CD8-positive, alpha-beta T cell (primary cell): ENCODE measurements at regions of chr5 and their contacts with region 1.

Region 1: DNA sequence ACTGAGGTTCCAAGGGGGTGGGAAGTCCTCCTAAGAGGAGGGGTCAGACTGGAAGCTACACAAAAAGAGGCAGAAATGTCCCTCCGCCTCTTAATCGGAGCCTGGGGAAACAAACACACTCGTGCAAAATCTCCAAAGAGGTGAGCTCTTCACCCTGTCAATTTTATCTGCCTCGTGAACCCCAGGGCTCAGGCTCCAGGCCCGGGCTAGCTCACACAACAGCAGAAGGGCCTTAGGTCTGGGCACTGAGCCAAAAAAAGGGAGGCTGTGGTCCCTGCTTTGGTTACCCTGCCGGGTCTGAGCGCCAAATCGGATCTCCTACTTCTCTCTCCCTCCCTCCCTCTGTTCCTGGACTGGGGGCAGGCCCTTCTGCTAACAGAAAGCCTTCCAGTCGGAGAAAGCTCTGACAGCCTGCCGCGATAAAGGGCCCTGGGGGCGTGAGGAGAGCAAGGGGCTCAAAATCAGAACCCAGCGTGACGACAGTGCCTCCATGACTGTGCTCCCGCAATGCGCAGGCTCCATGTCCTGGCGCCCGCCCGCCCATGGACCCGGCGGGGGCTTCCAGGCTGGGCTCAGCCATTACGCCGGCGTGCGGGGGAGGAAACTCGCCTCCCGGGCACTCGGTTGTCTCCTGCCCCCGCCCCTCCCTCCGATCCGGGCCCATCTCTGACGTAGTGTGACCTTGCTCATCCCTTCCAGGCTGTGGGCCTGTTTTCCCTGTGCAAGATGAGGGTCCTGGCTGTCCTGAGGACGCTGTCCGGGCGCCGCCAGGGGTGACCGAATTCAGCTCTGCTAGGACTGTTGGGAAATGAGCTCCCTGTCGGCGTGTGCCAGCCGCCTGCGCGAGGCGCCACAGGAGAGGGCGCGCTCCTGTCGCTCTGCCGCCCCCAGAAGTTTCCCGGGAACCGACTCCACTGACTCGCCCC is 865 bp upstream of the SLC22A4 start:
- DNase-seq: peak; percentile 24 to 82 (median 63)
- ATAC-seq: peak; percentile 53
- H3K4me3 ChIP-seq: peak overlapping the region; percentile 76 to 87
- H3K4me3 Mint-ChIP-seq: peak overlapping the region; percentile 90
- H3K27ac ChIP-seq: peak overlapping the region; percentile 42 to 50
- H3K27ac Mint-ChIP-seq: peak overlapping the region; percentile 77
- H3K4me1 ChIP-seq: peaks cover 14% of the 10 kb centered on the region
- H3K4me1 Mint-ChIP-seq: peaks cover 16% of the 10 kb centered on the region
- H3K27me3 ChIP-seq: peaks cover 0 to 2% of the 10 kb centered on the region in 2 experiments
- H3K27me3 Mint-ChIP-seq: peaks cover 15% of the 10 kb centered on the region
- CTCF ChIP-seq: no peak

Region 2: DNA sequence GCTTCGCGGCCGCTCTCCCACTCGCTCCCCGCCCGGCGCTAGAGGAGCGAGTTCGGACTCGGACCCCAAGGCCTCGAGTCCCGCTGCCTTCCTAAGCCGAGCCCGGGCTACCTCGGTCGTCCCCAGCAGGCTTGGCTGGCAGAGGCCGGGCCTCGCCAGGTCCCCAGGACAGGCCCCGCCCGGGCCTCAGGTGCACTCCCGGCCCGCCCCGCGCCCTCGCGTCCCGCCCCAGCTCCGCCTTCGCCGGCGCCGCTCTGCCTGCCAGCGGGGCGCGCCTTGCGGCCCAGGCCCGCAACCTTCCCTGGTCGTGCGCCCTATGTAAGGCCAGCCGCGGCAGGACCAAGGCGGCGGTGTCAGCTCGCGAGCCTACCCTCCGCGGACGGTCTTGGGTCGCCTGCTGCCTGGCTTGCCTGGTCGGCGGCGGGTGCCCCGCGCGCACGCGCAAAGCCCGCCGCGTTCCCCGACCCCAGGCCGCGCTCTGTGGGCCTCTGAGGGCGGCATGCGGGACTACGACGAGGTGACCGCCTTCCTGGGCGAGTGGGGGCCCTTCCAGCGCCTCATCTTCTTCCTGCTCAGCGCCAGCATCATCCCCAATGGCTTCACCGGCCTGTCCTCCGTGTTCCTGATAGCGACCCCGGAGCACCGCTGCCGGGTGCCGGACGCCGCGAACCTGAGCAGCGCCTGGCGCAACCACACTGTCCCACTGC is 76.3 kb after region 1 on chr5 and contains the start of gene SLC22A5:
- CTCF ChIA-PET with region 1: interaction called, 3 read pairs
- POLR2A ChIA-PET with region 1: interaction called, 3 read pairs
- intact Hi-C with region 1: loop called in 1 of 2 experiments (anchors 5 kb)
- DNase-seq: peak; percentile 44 to 84 (median 68)
- ATAC-seq: peak; percentile 94
- H3K4me3 ChIP-seq: peak within 1 kb of the TSS; percentile 68 to 78
- H3K4me3 Mint-ChIP-seq: peak within 1 kb of the TSS; percentile 81
- H3K27ac ChIP-seq: peak within 1 kb of the TSS; percentile 68 to 77
- H3K27ac Mint-ChIP-seq: peak within 1 kb of the TSS; percentile 84
- H3K4me1 ChIP-seq: peaks cover 15% of the 10 kb centered on the region
- H3K4me1 Mint-ChIP-seq: peaks cover 31% of the 10 kb centered on the region
- H3K27me3 ChIP-seq: no peaks in the 10 kb centered on the region
- H3K27me3 Mint-ChIP-seq: no peaks in the 10 kb centered on the region
- CTCF ChIP-seq: no peak
- total RNA-seq, gene SLC22A5: 4.5 to 5.3 TPM

Region 3: DNA sequence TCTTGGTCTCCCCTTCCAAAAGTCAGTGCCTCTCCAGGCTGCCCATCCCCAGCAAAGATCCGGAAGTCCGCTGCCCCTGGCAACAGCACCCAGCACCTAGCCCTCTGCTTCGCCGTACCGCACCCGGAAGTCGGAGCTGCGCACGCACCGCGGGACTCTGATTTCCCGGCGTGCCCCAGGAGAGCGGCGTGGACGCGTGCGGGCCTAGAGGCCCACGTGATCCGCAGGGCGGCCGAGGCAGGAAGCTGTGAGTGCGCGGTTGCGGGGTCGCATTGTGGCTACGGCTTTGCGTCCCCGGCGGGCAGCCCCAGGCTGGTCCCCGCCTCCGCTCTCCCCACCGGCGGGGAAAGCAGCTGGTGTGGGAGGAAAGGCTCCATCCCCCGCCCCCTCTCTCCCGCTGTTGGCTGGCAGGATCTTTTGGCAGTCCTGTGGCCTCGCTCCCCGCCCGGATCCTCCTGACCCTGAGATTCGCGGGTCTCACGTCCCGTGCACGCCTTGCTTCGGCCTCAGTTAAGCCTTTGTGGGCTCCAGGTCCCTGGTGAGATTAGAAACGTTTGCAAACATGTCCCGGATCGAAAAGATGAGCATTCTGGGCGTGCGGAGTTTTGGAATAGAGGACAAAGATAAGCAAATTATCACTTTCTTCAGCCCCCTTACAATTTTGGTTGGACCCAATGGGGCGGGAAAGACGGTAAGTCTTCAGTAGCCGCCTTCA is 263.6 kb after region 1 on chr5 and contains the start of gene RAD50:
- CTCF ChIA-PET with region 1: no interaction called
- POLR2A ChIA-PET with region 1: no interaction called
- intact Hi-C with region 1: loop called in 1 of 2 experiments (anchors 5 kb)
- DNase-seq: peak; percentile 83 to 96 (median 91)
- ATAC-seq: peak; percentile 95
- H3K4me3 ChIP-seq: peak within 1 kb of the TSS; percentile 62 to 97
- H3K4me3 Mint-ChIP-seq: peak within 1 kb of the TSS; percentile 98
- H3K27ac ChIP-seq: peak within 1 kb of the TSS; percentile 68 to 91
- H3K27ac Mint-ChIP-seq: peak within 1 kb of the TSS; percentile 98
- H3K4me1 ChIP-seq: peaks cover 21% of the 10 kb centered on the region
- H3K4me1 Mint-ChIP-seq: peaks cover 28% of the 10 kb centered on the region
- H3K27me3 ChIP-seq: no peaks in the 10 kb centered on the region
- H3K27me3 Mint-ChIP-seq: no peaks in the 10 kb centered on the region
- CTCF ChIP-seq: no peak
- total RNA-seq, gene RAD50: 8.0 to 8.7 TPM